Mammary epithelial cell (primary cell): ENCODE measurements at regions of chr11 and their contacts with region 1.

Region 1: DNA sequence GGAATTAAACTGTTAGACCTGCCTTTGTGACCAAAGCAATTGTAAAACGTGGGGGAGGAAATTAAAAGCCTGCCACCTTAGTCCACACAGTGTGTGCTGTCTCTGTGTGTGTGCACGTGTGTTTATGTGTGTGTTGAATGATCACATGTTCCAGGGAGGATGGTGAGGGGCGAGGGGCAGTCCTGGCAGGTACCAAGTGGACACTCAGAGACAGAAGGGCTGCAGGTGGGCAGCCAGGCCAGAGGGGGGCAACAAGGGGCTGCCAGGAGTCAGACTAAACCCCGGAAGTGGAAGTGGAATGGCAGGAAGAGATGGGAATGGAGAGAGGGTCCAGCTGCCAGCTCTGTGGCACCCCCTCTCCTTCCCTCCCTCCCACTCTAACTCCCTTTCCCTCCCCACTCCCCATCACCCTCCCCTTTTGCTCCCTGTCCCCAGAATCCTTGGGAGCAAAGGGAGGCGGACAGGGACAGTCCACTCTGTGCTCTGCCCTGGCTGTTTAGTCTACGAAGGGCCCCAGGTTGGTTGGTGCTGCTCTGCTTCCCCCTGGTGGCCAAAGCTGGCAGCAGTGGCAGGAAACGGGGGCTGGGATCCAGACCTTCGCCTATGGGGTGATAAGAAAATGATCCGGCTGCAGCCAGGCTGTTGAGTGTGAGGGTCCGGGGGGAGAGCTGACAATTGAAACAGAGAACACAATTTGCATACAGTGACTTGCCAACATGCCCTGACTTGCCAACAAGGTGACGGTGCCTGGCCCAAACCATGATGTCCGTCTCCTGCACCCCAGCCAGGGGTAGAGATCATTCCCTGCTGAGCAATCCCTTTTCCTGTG is 24.4 kb downstream of the P2RY2 start:
- DNase-seq: peak; percentile 63
- H3K4me3 ChIP-seq: no peak overlapping the region
- H3K27ac ChIP-seq: no peak overlapping the region
- H3K4me1 ChIP-seq: peaks cover 45% of the 10 kb centered on the region
- H3K27me3 ChIP-seq: no peaks in the 10 kb centered on the region
- CTCF ChIP-seq: peak; percentile 96 to 99

Region 2: DNA sequence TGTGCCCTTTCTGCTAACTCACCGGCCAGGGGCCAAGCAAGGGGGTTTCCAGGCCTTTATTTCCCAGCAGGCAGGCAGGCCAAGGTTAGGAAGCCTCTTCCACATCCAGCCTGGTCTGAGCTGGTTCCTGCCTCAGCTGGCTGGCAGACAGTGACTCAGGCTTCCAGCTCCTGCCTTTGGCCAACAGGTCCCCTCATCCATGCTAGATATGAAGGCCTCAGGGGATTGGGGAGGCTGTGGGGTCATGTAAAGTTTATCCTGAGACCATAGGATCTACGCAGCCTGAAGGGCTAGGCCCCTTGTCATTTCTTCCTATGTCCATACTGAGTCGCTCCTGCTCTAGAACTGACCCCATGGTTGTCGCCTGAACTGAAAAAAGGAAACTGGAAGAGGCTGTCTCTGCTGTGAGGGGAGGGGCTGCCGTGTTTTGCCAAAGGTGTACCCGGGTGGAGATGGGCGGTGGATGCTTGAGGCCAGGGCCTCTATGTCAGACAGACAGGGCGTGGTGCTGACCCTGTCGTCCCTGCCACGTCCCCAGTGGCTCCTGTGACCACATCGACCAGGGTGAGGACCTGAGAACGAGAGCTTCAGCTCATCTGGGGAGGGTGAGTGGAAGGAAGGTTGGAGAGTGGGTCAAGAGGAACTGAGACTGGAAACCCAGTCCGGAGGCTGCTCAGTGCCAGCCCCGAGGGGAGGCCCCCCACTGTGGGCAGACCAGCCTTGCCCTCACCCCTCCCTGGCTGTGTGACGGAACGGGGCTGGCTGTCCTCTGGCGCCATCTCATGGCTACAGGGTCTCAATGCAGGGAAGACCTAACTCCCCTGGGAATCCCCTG is 46.6 kb after region 1 on chr11:
- CTCF ChIA-PET with region 1: no interaction called
- dilution Hi-C with region 1: no loop called
- in situ Hi-C with region 1: loop called in 1 of 2 experiments (anchors 5 kb)
- intact Hi-C with region 1: loop called (anchors 1 kb)
- DNase-seq: peak; percentile 87
- H3K4me3 ChIP-seq: no peak overlapping the region
- H3K27ac ChIP-seq: peak overlapping the region; percentile 30
- H3K4me1 ChIP-seq: peaks cover 15% of the 10 kb centered on the region
- H3K27me3 ChIP-seq: no peaks in the 10 kb centered on the region
- CTCF ChIP-seq: peak; percentile 81 to 98

Region 3: GRCh38 chr11:73314117-73314961 is 71.9 kb after region 1 on chr11:
- CTCF ChIA-PET with region 1: no interaction called
- dilution Hi-C with region 1: loop called (anchors 5 kb)
- in situ Hi-C with region 1: no loop called
- intact Hi-C with region 1: no loop called
- DNase-seq: peak; percentile 33
- H3K4me3 ChIP-seq: no peak overlapping the region
- H3K27ac ChIP-seq: peak overlapping the region; percentile 36
- H3K4me1 ChIP-seq: peaks cover 55% of the 10 kb centered on the region
- H3K27me3 ChIP-seq: no peaks in the 10 kb centered on the region
- CTCF ChIP-seq: no peak